Head of caudate nucleus (tissue), 42 donors: ENCODE measurements at regions of chr14 and their contacts with region 1.

Region 1: DNA sequence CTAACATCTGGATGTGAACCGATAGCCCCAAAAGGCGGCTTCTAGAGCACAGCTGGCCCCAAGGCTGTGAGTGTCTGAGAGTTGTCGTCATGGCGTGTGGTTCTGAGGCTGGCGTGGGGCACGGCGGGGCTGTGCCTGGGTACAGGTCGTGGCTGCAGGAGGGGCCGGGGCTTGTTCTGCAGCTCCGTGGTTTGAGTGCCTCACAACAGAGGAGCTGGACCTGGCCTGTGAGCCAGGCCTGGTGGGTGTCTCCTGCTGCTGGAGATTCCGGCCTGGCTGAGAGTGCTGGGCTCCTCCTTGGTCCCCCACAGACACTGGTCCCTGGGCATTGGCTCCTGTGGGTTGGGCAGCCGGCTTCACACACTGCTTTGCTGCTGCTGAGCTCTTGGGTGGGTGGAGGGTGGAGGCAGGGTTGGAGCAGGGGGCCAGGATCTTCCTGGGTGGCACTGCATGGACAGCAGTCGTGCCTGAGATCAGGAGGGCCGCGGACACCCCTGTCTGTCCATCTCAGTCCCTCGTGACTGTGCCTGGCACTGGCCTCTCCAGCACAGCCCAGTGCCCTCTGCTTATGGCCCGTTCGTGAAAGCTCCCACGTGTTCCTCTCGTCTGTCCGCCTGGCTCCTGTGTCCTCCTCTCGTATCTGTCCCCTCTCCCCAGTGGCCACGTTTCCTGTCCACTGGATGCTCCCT is 31.8 kb upstream of the TEX22 start:
- DNase-seq: peak in 17 of 42 donors; percentile 21 to 72 (median 57)

Region 2: DNA sequence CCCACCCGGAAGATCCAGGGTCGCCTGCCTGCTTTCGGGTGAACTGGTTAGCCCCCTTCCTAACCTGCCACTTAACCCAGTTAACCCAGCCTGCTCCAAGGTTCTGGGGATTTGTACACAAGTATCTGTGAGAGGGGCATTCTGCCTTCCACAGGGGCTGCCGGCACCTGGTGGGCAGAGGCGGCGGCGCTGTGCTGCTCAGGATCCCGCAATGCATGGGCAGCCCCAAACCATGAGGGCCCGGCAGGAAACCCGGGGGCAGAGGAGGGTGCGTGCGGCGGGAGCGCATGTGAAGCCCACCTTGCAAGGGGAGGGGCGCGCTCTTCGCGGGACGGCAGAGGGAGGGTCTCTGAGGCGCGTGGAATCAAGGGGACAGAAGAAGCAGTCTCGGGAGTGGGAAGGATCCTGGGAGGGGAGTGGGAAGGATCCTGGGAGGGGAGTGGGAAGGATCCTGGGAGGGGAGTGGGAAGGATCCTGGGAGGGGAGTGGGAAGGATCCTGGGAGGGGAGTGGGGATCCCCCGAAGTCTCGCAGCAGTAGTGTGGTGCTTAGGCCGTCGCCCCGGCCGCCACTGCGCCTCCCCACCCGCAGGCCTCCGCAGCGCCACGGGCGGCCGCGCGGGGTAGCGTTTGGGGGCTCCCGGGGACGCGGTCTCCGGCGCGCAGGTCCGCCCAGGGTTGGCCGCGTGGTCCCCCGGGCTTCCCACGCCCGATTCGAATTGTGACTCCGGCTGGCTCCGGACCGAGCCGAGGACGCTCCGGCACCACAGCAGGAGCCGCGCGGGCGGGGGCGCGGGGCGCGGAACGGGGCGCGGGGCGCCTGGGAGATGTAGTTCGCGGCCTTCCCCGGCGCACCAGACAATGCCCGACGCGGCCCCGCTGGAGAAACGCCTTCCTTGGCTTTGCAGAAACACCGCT is 48.2 kb after region 1 on chr14:
- intact Hi-C with region 1: no loop called
- DNase-seq: peak; percentile 51 to 91 (median 84)

Region 3: DNA sequence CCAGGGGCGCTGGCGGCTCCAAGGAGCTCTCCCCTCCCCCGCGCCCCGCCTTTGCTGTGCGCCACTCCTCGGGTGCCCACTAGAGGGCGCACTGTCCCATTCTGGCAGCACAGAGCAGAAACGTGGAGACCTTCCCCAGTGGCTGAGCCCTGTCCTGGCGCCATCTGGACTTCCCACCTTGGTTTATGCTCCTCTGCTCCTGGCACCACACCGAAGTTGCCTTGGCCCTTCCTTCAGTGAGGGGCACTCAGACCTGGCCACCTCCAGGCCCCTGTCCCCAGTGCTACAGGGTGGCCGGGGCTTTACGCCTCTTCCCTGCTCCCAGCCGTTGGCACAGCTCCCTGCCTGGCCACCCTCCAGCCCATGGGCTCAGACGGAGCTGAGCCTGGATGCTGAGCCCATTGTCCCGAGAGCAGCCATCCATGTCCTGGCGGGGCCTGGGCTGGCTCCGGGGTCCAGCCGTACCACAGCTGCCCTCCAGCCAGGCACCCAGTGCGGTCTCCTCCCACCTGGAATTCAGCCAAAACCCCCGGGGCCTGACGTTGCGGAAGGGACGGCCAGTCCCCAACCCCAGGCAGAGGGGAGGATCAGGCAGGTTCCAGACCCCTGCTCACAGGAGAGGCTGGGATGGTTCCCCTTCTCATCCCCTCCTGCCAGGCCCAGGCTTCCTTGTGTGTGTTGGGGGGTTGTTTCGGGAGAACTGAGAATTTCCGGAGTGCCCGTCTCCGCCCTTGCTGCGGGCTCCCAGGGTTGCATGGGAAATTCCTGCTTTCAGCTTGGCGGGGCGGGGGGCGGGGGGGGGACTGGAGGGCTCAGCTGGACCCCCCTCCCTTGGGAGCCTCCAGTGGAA is 114.6 kb after region 1 on chr14:
- intact Hi-C with region 1: loop called (anchors 5 kb)
- DNase-seq: peak; percentile 80 to 96 (median 90)